GM13977 (cell line): ENCODE measurements at regions of chr17 and their contacts with region 1.

Region 1: GRCh38 chr17:43673516-43674323 is 12.0 kb upstream of the MEOX1 start:
- DNase-seq: peak; percentile 69
- CTCF ChIP-seq: peak; percentile 83

Region 2: GRCh38 chr17:43477832-43478634 is 195.7 kb before region 1 on chr17:
- in situ Hi-C with region 1: no loop called
- DNase-seq: no peak
- CTCF ChIP-seq: no peak

Region 3: GRCh38 chr17:43579566-43580140 is 94.1 kb before region 1 on chr17:
- in situ Hi-C with region 1: loop called (anchors 5 kb)
- DNase-seq: no peak
- CTCF ChIP-seq: no peak